Activated naive CD4-positive, alpha-beta T cell treated with anti-CD3 and anti-CD28 coated beads for 36 hours (primary cell): ENCODE measurements at regions of chr18 and their contacts with region 1.

Region 1: DNA sequence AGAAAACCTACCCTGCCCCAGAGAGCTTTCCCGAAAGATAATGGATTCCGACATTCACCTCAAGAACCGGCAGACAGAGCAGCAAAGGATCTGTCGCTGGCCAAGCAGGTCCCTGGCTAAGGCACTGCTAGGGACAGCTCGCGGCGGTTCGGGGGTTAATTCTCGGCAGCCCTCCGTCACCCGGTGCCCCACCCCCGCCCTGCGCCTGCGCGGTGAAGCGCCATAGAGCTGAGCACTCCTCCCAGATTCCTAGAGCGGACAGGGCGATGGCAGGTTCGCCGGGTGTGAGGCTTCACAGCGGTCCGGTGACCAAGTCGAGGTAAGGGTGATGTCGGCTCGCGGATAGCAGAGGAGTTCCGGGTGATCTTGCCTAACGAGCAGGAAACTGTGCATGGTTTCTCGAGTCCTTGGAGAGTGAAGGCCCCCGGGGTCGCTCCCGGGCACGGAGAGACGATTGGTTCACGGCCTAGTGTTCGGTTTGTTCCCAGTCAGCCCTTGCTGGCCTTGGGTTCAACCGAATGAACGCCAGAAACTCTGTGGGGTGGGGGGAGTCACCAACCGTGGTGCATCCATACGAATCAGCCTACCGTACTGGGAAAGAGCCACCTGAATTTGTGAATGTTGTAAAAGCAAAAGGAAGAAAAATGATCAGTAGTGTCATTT is at the start of gene ZSCAN30:
- DNase-seq: peak; percentile 96
- H3K4me3 Mint-ChIP-seq: peak within 1 kb of the TSS; percentile 96
- H3K27ac Mint-ChIP-seq: peak within 1 kb of the TSS; percentile 97
- H3K4me1 Mint-ChIP-seq: peaks cover 48% of the 10 kb centered on the region
- H3K27me3 Mint-ChIP-seq: peaks cover 2% of the 10 kb centered on the region
- total RNA-seq, gene ZSCAN30: 12.0 to 14.3 TPM

Region 2: DNA sequence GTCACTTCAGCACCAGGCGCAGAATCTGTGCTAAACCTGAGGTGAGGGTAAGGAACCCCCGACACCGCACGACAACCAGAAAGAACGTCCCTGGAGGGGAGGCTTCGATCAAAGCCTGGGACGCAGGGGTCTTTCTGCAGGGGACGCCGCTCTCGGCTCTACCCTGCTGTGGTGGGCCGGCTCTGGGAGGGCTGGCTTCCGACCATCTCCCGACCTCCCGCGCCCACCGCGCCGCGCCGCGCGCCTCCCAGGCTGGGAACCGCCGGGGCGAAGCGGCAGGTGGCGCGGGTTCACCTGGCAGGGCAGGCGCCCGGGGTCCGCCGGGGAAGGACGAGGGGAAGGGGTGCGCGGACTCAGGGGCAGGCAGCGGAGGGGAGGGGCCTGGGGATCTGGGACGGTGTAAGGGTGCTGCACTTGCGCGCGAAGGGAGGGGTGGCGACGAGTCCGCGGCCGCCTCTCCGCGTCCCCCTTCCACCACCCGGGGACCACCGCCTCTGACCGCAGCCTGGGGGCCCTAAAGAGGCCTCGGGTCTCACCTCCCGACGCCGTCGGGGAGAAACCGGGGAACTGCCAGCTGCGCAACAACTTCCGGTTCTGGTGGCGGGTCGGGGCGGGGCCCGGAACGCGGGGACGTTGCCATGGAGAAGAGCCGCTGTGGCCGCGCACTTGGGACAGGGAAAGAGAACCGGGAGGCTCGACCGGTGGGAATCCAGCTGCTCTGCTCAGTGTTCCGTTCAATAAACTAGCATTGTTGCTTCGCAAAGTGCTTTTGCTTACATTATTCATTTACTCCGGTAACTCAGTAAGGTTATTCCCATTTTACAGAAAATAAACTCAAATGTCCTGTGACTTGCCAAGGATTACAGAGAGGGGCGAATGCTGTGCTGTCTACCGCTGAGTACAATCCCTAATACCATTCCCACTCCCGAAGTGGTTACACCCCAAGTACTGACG is 86.8 kb after region 1 on chr18 and contains the start of gene ZNF396:
- CTCF ChIA-PET with region 1: no interaction called
- intact Hi-C with region 1: loop called (anchors 1 kb)
- DNase-seq: peak; percentile 83
- H3K4me3 Mint-ChIP-seq: peak within 1 kb of the TSS; percentile 79
- H3K27ac Mint-ChIP-seq: peak within 1 kb of the TSS; percentile 13
- H3K4me1 Mint-ChIP-seq: peaks cover 6% of the 10 kb centered on the region
- H3K27me3 Mint-ChIP-seq: no peaks in the 10 kb centered on the region
- total RNA-seq, gene ZNF396: 0.74 to 0.77 TPM